ENCODE measurements at regions of chr3 and their contacts with region 1.

Region 1: DNA sequence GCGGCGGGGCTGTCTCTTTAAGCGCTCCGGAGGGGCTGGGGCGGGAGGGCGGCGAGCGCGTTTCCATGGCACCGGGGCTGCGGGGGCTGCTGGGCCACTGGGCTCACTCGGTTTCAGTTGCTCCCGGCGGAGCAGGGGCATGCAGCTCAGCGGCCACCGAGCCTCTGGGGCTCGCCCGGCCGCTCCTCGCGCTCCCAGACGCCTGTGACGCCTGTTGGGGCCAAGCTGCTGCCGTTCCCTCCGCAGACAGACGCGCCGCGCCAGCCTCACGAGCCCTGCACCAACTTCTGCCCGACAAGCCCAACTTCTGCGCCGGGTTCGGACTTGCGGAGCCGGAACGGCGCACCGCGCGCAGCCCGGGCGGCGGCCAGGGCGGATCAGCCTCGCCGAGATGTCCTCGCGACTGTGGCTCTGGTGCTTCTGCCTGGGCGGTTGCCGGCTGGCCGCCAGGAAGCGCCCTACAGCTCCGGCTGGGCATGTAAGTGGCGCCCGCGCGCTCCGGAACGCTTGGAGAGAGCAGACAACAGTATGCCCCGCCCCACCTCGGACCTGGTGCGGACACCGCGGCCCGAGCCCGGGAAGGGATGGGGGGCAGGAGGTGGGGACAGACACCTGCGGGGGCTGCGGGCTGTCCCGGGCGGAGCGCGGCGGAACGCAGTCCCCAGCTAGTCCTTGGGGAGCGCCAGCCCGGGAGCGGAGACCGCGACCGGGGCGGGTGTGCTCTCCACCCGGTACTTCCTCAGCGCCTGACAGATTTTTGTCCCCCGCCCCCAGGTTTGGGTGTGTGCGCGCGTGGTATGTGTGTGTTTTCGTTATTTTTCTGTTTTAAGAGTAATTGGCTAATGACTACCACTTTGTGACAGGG is 154.1 kb upstream of the GOLIM4 start:
- DNase-seq: peak; percentile 90
- H3K4me3 Mint-ChIP-seq: peak overlapping the region; percentile 90
- H3K27ac Mint-ChIP-seq: peak overlapping the region; percentile 45
- H3K4me1 Mint-ChIP-seq: peaks cover 17% of the 10 kb centered on the region
- H3K27me3 Mint-ChIP-seq: peaks cover 12% of the 10 kb centered on the region
- CTCF ChIP-seq: peak; percentile 61

Region 2: GRCh38 chr3:168213920-168214319 is 35.9 kb before region 1 on chr3:
- CTCF ChIA-PET with region 1: interaction called, 11 read pairs
- intact Hi-C with region 1: no loop called
- DNase-seq: no peak
- H3K4me3 Mint-ChIP-seq: no peak overlapping the region
- H3K27ac Mint-ChIP-seq: no peak overlapping the region
- H3K4me1 Mint-ChIP-seq: no peaks in the 10 kb centered on the region
- H3K27me3 Mint-ChIP-seq: no peaks in the 10 kb centered on the region
- CTCF ChIP-seq: no peak

Region 3: DNA sequence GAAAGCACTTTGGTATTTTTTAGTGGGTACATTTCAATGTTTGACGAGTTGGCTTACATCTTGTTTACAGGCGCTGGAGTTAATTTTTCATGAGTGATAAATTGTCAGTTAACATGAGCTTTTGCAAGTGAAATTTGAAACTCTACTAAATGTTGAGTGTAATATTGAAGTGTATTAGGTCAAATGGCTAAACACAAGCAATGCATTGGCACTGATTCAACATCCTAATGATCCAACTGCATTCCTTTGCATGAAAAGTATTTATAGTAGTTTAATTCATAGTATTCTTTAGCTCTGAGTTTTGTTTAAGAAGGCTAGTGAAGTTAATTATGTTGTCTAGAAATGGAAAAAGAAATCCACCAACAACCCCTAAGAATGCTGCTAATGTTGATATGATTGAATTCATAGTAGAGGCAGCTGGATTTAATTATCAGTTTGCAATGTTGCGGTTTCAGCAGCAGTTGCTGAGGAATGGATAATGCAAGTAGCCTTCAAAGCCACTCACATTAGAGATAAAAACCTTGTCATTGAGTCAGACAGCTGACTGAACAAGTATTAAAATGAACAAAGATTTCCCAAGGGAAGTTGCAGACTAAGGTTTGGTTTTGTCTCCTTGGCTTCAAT is 91.5 kb after region 1 on chr3:
- CTCF ChIA-PET with region 1: no interaction called
- intact Hi-C with region 1: no loop called
- DNase-seq: peak; percentile 21
- H3K4me3 Mint-ChIP-seq: no peak overlapping the region
- H3K27ac Mint-ChIP-seq: no peak overlapping the region
- H3K4me1 Mint-ChIP-seq: peaks cover 27% of the 10 kb centered on the region
- H3K27me3 Mint-ChIP-seq: no peaks in the 10 kb centered on the region
- CTCF ChIP-seq: no peak

Region 4: GRCh38 chr3:168417016-168417415 is 167.2 kb after region 1 on chr3:
- CTCF ChIA-PET with region 1: no interaction called
- intact Hi-C with region 1: loop called (anchors 5 kb)
- DNase-seq: peak; percentile 78
- H3K4me3 Mint-ChIP-seq: no peak overlapping the region
- H3K27ac Mint-ChIP-seq: peak overlapping the region; percentile 68
- H3K4me1 Mint-ChIP-seq: peaks cover 60% of the 10 kb centered on the region
- H3K27me3 Mint-ChIP-seq: no peaks in the 10 kb centered on the region
- CTCF ChIP-seq: no peak

Region 5: GRCh38 chr3:168574455-168575158 is 324.8 kb after region 1 on chr3:
- CTCF ChIA-PET with region 1: no interaction called
- intact Hi-C with region 1: no loop called
- DNase-seq: no peak
- H3K4me3 Mint-ChIP-seq: no peak overlapping the region
- H3K27ac Mint-ChIP-seq: no peak overlapping the region
- H3K4me1 Mint-ChIP-seq: peaks cover 10% of the 10 kb centered on the region
- H3K27me3 Mint-ChIP-seq: no peaks in the 10 kb centered on the region
- CTCF ChIP-seq: no peak

Measured in Calu3 (cell line).